Common myeloid progenitor, CD34-positive (primary cell): ENCODE measurements at regions of chr10 and their contacts with region 1.

Region 1: DNA sequence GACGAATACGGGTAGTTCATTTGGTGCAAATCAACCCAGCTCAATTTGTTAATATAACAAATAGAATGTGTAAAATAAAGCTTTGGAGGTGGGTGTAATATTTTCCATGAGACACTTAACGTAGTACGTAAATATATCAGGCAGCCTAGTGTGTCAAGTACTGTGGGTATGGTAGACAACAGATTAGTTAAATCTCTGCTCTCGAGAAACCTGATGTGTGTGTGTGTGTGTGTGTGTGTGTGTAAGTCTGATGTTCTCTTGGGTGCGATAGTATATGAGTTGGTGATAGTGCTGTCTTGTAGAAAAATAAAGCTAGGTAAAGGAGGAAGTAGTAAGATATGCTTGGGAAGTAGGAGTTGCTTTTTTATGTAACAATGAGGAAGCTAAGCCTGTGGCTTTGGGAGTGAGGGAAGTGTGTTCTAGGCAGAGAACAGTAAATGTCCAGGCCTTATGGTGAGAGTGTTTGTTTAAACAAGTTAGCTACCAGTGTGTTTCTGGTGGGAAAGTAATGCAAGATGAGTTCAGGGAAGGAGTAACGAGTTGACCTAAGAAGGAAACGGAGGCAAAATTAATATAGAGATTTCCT is 26.1 kb downstream of the WAC start:
- DNase-seq: peak; percentile 10 to 46 (median 21)
- H3K4me3 ChIP-seq: no peak overlapping the region
- H3K27ac ChIP-seq: no peak overlapping the region
- H3K4me1 ChIP-seq: peaks cover 7 to 17% (median 10%) of the 10 kb centered on the region in 4 experiments
- H3K27me3 ChIP-seq: no peaks in the 10 kb centered on the region

Region 2: GRCh38 chr10:28533571-28534304 is 25.3 kb before region 1 on chr10:
- CTCF ChIA-PET with region 1: interaction called, 10 read pairs
- POLR2A ChIA-PET with region 1: no interaction called
- DNase-seq: peak; percentile 50 to 67 (median 64)
- H3K4me3 ChIP-seq: peak overlapping the region; percentile 79 to 99 (median 91)
- H3K27ac ChIP-seq: peak overlapping the region; percentile 94 to 96
- H3K4me1 ChIP-seq: peaks cover 12 to 35% (median 18%) of the 10 kb centered on the region in 4 experiments
- H3K27me3 ChIP-seq: no peaks in the 10 kb centered on the region